Left ventricle myocardium inferior (tissue), 1 donor: ENCODE measurements at regions of chr12 and their contacts with region 1.

Region 1: GRCh38 chr12:30847259-30847658 is 79.3 kb upstream of the TSPAN11 start:
- DNase-seq: no peak
- H3K4me3 ChIP-seq: no peak overlapping the region
- H3K27ac ChIP-seq: no peak overlapping the region
- H3K4me1 ChIP-seq: peaks cover 6% of the 10 kb centered on the region
- H3K27me3 ChIP-seq: no peaks in the 10 kb centered on the region
- CTCF ChIP-seq: peak; percentile 75

Region 2: DNA sequence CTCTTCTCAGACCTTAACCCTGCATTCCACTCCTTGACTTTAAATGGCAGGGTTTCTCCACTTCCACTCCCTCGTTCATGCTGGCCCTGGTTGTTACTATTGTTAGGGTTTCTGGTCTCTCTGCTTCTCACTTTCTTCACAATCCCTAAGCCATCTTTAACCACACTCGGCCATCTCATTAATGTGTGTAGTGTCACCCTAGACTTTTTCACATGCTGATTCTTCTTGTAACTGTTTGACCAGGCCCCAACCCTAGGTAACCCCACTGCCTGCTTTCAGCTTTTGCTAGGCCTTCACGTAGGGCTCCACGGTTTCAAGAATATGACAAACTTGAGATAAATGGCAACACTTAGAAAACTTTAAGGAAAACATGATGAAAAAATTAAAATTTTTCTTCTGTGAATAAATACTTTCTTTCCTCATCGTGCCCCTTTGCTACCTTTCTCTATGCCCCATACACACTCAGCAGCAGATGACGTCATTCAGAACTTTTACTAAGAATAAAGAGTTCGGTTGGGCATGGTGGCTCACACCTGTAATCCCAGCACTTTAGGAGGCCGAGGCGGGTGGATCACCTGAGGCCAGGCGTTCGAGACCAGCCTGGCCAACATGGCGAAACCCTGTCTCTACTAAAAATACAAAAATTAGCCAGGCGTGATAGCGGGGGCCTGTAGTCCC is 346.6 kb before region 1 on chr12:
- intact Hi-C with region 1: no loop called
- DNase-seq: no peak
- H3K4me3 ChIP-seq: no peak overlapping the region
- H3K27ac ChIP-seq: no peak overlapping the region
- H3K4me1 ChIP-seq: no peaks in the 10 kb centered on the region
- H3K27me3 ChIP-seq: no peaks in the 10 kb centered on the region
- CTCF ChIP-seq: no peak

Region 3: GRCh38 chr12:30548203-30548602 is 299.1 kb before region 1 on chr12:
- intact Hi-C with region 1: no loop called
- DNase-seq: no peak
- H3K4me3 ChIP-seq: no peak overlapping the region
- H3K27ac ChIP-seq: no peak overlapping the region
- H3K4me1 ChIP-seq: no peaks in the 10 kb centered on the region
- H3K27me3 ChIP-seq: no peaks in the 10 kb centered on the region
- CTCF ChIP-seq: no peak

Region 4: DNA sequence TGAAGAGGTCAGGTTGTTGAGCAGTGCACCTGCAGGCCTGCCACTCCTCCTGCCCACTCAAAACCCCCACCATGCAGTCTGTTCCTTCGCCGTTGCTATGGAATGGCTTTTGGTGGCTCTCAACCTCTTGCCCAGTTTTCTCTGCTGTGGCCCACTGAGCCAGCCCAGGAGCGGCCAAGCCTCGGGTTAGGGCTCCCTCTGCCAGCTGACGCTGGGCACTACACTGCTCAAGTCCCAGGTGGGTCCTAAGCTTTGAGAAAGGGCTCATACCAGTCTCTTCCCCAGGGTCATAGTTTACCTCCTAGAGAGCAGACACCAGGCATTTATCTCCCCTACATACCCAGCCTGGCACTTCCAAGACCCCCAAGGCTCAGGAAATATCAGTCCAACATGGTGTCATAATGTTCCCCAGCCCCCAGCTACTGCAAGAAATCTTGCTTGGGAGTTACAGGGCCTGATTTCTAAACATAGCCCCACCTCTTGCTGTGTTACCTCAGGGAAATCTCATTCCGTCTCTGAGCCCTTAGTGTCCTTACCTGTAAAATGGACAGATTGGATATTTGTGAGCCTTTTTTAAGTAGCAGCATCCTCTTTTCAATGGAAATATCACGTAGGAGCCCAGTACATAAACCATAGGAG is 138.7 kb after region 1 on chr12:
- intact Hi-C with region 1: loop called (anchors 5 kb)
- DNase-seq: peak; percentile 57
- H3K4me3 ChIP-seq: no peak overlapping the region
- H3K27ac ChIP-seq: no peak overlapping the region
- H3K4me1 ChIP-seq: peaks cover 22% of the 10 kb centered on the region
- H3K27me3 ChIP-seq: no peaks in the 10 kb centered on the region
- CTCF ChIP-seq: peak; percentile 82

Region 5: DNA sequence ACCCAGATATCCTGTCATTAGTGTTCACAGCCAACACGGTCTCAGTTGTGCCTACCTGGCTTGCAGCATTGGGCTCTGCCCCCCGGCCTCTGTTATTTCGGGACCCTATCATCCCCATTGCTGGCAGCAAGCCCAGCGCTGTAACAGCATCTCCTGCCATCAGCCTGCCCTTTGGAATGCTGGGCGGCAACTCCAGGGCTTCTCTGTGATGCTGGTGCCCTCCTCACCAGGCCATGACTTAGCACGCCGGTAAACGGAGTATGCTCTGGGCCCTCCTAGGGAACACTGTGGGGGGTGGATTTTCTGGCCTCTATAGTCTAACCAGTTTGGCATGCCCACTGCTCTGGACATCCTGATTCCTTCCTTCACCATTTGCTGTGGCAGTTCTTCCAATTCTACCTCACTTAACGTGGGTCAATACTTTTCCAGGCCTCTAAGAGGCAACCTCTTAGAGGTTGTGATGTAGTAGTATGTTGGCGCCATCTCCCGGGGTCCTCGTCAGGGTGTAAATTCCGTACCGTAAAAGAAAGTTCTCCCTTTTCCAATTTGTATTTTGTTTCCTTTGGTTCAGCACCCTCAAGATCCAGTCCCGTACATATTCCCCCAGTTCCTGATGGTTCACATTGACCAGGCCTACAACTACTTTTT is 398.7 kb after region 1 on chr12:
- intact Hi-C with region 1: loop called (anchors 10 kb)
- DNase-seq: no peak
- H3K4me3 ChIP-seq: no peak overlapping the region
- H3K27ac ChIP-seq: no peak overlapping the region
- H3K4me1 ChIP-seq: no peaks in the 10 kb centered on the region
- H3K27me3 ChIP-seq: peaks cover 21% of the 10 kb centered on the region
- CTCF ChIP-seq: no peak